GM12878 (cell line): ENCODE measurements at regions of chr2 and their contacts with region 1.

Region 1: GRCh38 chr2:161243905-161244304 is 64.3 kb upstream of the PSMD14 start:
- DNase-seq: no peak
- ATAC-seq: peak; percentile 33
- H3K4me3 ChIP-seq: peak overlapping the region; percentile 63
- H3K27ac ChIP-seq: peak overlapping the region; percentile 84
- H3K4me1 ChIP-seq: peaks cover 18% of the 10 kb centered on the region
- H3K27me3 ChIP-seq: no peaks in the 10 kb centered on the region
- CTCF ChIP-seq: no peak
- EP300 ChIP-seq: no peak
- POLR2A ChIP-seq: no peak
- RAD21 ChIP-seq: no peak

Region 2: GRCh38 chr2:161077367-161078210 is 166.3 kb before region 1 on chr2:
- CTCF ChIA-PET with region 1: no interaction called
- POLR2A ChIA-PET with region 1: no interaction called
- RAD21 ChIA-PET with region 1: no interaction called
- SMC1A ChIA-PET with region 1: interaction called, 4 read pairs
- in situ Hi-C with region 1: no loop called
- intact Hi-C with region 1: loop called (anchors 5 kb)
- DNase-seq: peak; percentile 81
- ATAC-seq: peak; percentile 90
- H3K4me3 ChIP-seq: no peak overlapping the region
- H3K27ac ChIP-seq: peak overlapping the region; percentile 71
- H3K4me1 ChIP-seq: peaks cover 20% of the 10 kb centered on the region
- H3K27me3 ChIP-seq: no peaks in the 10 kb centered on the region
- CTCF ChIP-seq: no peak
- EP300 ChIP-seq: peak; percentile 70 to 74
- POLR2A ChIP-seq: no peak
- RAD21 ChIP-seq: 0 out of 2 replicates have a peak, but pooled peaks have one; percentile 5

Region 3: GRCh38 chr2:161273038-161273760 is 29.3 kb after region 1 on chr2:
- CTCF ChIA-PET with region 1: interaction called, 26 read pairs
- POLR2A ChIA-PET with region 1: no interaction called
- RAD21 ChIA-PET with region 1: interaction called, 4 read pairs
- SMC1A ChIA-PET with region 1: interaction called, 10 read pairs
- in situ Hi-C with region 1: no loop called
- intact Hi-C with region 1: no loop called
- DNase-seq: peak; percentile 23
- ATAC-seq: peak; percentile 90
- H3K4me3 ChIP-seq: no peak overlapping the region
- H3K27ac ChIP-seq: no peak overlapping the region
- H3K4me1 ChIP-seq: no peaks in the 10 kb centered on the region
- H3K27me3 ChIP-seq: no peaks in the 10 kb centered on the region
- CTCF ChIP-seq: peak; percentile 45 to 66 (median 57); a peak in 5 of 6 replicates
- EP300 ChIP-seq: no peak
- POLR2A ChIP-seq: no peak
- RAD21 ChIP-seq: peak; percentile 82

Region 4: GRCh38 chr2:161448431-161448830 is 204.5 kb after region 1 on chr2:
- CTCF ChIA-PET with region 1: no interaction called
- POLR2A ChIA-PET with region 1: no interaction called
- RAD21 ChIA-PET with region 1: no interaction called
- SMC1A ChIA-PET with region 1: no interaction called
- in situ Hi-C with region 1: no loop called
- intact Hi-C with region 1: no loop called
- DNase-seq: no peak
- ATAC-seq: no peak
- H3K4me3 ChIP-seq: no peak overlapping the region
- H3K27ac ChIP-seq: no peak overlapping the region
- H3K4me1 ChIP-seq: no peaks in the 10 kb centered on the region
- H3K27me3 ChIP-seq: no peaks in the 10 kb centered on the region
- CTCF ChIP-seq: no peak
- EP300 ChIP-seq: no peak
- POLR2A ChIP-seq: no peak
- RAD21 ChIP-seq: no peak